ENCODE measurements at regions of chr14 and their contacts with region 1.

Region 1: GRCh38 chr14:72476657-72477499 is 417.0 kb downstream of the DPF3 start:
- DNase-seq: peak; percentile 66
- ATAC-seq: peak; percentile 93
- H3K4me3 Mint-ChIP-seq: peak overlapping the region; percentile 67
- H3K27ac Mint-ChIP-seq: peak overlapping the region; percentile 91
- H3K4me1 Mint-ChIP-seq: peaks cover 70% of the 10 kb centered on the region
- H3K27me3 Mint-ChIP-seq: peaks cover 13% of the 10 kb centered on the region

Region 2: DNA sequence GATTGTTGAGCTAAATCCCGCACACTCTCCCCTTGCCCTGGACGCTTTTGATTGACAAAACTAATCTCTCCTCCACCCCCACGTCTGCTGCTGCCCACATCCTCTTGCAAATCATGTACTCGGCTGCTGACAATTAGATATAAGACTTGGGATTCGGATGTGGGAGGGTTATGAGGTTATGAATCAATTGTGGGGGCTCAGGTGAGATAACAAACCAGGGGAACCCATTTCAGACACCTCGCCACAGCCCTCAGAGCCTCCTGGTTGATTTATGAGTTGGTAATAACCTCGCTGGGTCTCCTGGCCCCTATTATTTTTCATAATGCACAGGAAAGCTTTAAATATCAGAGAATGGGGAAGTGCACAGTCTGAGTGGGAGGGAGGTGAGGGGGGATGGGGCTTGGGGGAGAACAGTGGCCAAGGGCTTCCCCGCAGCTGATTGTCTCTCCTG is 32.9 kb before region 1 on chr14:
- POLR2A ChIA-PET with region 1: interaction called, 52 read pairs
- DNase-seq: peak; percentile 56
- ATAC-seq: peak; percentile 53
- H3K4me3 Mint-ChIP-seq: peak overlapping the region; percentile 79
- H3K27ac Mint-ChIP-seq: peak overlapping the region; percentile 90
- H3K4me1 Mint-ChIP-seq: peaks cover 75% of the 10 kb centered on the region
- H3K27me3 Mint-ChIP-seq: peaks cover 4% of the 10 kb centered on the region

Region 3: DNA sequence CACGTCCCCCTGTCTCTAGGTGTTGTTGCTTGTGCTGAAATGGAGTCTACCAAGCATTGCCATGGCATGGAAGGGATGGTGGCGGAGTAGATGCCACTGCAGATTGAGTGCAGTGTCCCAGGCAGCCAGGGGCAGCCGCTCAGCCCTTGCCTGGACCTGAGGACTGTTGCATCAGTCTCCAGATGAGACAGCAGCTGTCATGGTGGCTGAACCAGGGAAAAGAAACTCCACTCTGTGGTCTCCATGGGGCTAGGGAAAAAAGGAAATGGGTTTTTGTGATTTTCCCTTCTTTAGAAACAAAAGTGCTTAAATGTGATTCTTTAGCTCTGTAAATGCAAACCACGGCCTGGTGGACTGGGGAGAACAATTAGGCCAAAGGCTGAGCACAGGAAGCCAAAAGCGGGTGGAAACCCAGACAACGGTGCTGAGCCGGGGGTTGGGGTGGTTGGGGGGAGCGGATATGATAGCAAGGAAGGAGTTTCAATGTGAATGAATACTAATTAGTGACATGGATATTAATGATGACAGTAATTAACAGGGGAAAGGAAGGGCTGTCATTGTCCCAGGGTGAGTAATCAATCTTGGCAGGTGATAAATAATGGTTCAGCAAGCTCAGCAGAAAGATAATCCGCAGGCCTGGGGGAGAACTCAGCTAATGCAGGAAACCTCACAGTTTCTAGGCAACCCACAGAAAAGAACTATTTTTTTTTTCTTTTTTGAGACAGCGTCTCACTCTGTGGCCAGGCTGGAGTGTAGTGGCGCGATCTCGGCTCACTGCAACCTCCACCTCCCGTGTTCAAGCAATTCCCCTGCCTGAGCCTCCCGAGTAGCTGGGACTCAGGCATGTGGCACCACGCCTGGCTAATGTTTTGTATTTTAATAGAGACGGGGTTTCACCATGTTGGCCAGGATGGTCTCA is 25.6 kb before region 1 on chr14:
- POLR2A ChIA-PET with region 1: interaction called, 24 read pairs
- DNase-seq: peak; percentile 65
- ATAC-seq: peak; percentile 84
- H3K4me3 Mint-ChIP-seq: peak overlapping the region; percentile 72
- H3K27ac Mint-ChIP-seq: peak overlapping the region; percentile 93
- H3K4me1 Mint-ChIP-seq: peaks cover 61% of the 10 kb centered on the region
- H3K27me3 Mint-ChIP-seq: peaks cover 11% of the 10 kb centered on the region

Region 4: GRCh38 chr14:72643317-72643801 is 166.5 kb after region 1 on chr14:
- POLR2A ChIA-PET with region 1: no interaction called
- DNase-seq: no peak
- ATAC-seq: no peak
- H3K4me3 Mint-ChIP-seq: no peak overlapping the region
- H3K27ac Mint-ChIP-seq: no peak overlapping the region
- H3K4me1 Mint-ChIP-seq: no peaks in the 10 kb centered on the region
- H3K27me3 Mint-ChIP-seq: peaks cover 14% of the 10 kb centered on the region

Measured in activated naive CD8-positive, alpha-beta T cell treated with anti-CD3 and anti-CD28 coated beads, Interleukin-2, amount 10 ng/mL, durations not matched to agents 7 days and 5 days (primary cell).